ENCODE measurements at regions of chr4 and their contacts with region 1.

Region 1: DNA sequence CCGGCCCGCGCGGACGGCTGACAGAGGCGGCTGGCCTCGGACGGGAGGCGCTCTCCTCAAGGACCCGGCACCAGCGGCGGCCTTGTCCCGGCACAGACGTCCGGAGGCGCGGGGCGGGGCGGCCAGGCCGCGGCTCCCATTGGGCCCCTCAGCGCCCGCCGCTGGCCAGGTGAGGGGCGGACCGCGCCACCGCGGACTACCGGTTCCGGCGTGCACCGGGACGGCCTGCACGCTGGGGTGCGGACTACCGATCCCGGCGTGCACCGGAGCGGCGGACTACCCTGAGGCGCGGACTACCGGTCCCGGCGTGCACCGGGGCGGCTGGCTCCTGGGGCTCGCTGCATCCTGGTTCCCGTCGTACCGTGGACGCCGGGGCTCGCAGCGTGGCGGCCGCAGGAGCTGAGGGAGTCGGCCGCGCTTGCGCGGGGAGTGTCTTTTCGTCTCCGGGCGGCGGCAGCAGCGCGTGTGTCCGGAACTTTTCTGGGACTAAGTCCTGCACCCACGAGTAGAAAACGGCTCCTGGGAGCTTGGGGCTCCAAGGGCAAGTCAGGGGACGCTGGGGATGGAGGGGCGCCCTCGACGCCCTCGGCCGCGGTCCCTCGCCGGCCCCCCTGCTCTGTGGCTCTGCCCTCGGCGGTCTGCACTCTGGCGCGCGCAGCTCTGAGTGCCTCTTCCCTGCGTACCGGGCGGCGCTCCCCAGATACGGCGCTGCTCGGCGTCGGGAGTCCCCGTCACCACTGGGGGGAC is at the start of gene LETM1:
- DNase-seq: peak; percentile 92
- ATAC-seq: peak; percentile 96
- H3K4me3 ChIP-seq: peak within 1 kb of the TSS; percentile 38 to 93 (median 90)
- H3K4me3 Mint-ChIP-seq: peak within 1 kb of the TSS; percentile 85
- H3K27ac ChIP-seq: peak within 1 kb of the TSS in 1 of 2 donors; percentile 61
- H3K27ac Mint-ChIP-seq: peak within 1 kb of the TSS; percentile 56
- H3K4me1 ChIP-seq: peaks cover 15 to 19% of the 10 kb centered on the region in 2 donors
- H3K4me1 Mint-ChIP-seq: peaks cover 23% of the 10 kb centered on the region
- H3K27me3 ChIP-seq: peaks cover 0 to 3% (median 0%) of the 10 kb centered on the region in 4 experiments
- H3K27me3 Mint-ChIP-seq: no peaks in the 10 kb centered on the region
- CTCF ChIP-seq: peak; percentile 17
- total RNA-seq, gene LETM1: 44.8 and 45.1 TPM in 2 replicates

Region 2: GRCh38 chr4:1579901-1580691 is 276.1 kb before region 1 on chr4:
- CTCF ChIA-PET with region 1: no interaction called
- POLR2A ChIA-PET with region 1: no interaction called
- intact Hi-C with region 1: loop called (anchors 5 kb)
- DNase-seq: peak; percentile 95
- ATAC-seq: peak; percentile 79
- H3K4me3 ChIP-seq: peak overlapping the region; percentile 72 to 84 (median 76)
- H3K4me3 Mint-ChIP-seq: peak overlapping the region; percentile 85
- H3K27ac ChIP-seq: peak overlapping the region; percentile 46 to 71
- H3K27ac Mint-ChIP-seq: peak overlapping the region; percentile 83
- H3K4me1 ChIP-seq: peaks cover 0 to 4% of the 10 kb centered on the region in 2 donors
- H3K4me1 Mint-ChIP-seq: peaks cover 4% of the 10 kb centered on the region
- H3K27me3 ChIP-seq: no peaks in the 10 kb centered on the region
- H3K27me3 Mint-ChIP-seq: no peaks in the 10 kb centered on the region
- CTCF ChIP-seq: no peak

Region 3: DNA sequence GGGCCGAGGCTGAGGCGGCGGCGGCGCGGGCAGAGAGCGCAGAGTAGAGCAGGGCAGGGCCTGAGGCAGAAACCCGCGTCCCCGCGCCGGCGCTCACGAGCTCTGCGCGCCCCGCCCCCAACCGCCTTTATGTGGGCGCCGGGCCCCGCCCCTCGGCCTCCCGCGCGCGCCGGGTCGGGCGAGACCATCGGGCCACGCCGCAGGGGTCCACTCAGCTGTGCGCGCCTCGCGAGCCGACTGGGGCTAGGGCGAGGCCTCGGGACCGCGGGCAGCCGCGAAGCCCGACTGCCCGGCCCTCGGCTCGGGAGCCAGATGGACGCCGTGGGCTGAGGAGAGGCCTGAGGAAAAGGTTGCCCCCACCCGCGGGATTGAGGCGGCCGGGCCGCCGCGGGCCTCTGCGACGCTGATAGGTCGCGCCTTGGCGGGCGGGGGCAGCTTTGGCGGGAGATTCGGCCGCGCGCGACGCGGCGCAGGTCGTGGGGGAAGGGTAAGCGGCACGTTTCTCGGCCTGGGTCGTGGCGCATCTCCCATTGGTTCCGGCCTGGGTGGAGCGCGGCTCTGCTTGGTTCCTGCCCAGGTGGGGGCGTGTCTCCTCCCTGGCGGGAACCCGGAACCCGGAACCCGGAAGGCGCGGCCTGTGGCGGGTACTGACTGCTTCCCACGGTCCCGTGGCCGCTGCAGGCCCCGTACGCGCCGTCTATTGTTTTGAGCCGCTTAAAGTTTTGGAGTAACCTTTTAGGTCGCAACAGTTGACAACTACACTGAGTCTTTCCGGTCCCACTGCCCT is 143.8 kb before region 1 on chr4 and contains the start of gene SLBP:
- CTCF ChIA-PET with region 1: interaction called, 3 read pairs
- POLR2A ChIA-PET with region 1: no interaction called
- intact Hi-C with region 1: loop called (anchors 1 kb)
- DNase-seq: peak; percentile 99
- ATAC-seq: peak; percentile 86
- H3K4me3 ChIP-seq: peak within 1 kb of the TSS; percentile 78 to 100 (median 96)
- H3K4me3 Mint-ChIP-seq: peak within 1 kb of the TSS; percentile 91
- H3K27ac ChIP-seq: peak within 1 kb of the TSS; percentile 83 to 99
- H3K27ac Mint-ChIP-seq: peak within 1 kb of the TSS; percentile 98
- H3K4me1 ChIP-seq: peaks cover 52 to 60% of the 10 kb centered on the region in 2 donors
- H3K4me1 Mint-ChIP-seq: peaks cover 66% of the 10 kb centered on the region
- H3K27me3 ChIP-seq: no peaks in the 10 kb centered on the region
- H3K27me3 Mint-ChIP-seq: no peaks in the 10 kb centered on the region
- CTCF ChIP-seq: no peak
- total RNA-seq, gene SLBP: 31.8 and 33.9 TPM in 2 replicates

Region 4: GRCh38 chr4:1721004-1721665 is 135.1 kb before region 1 on chr4 and contains the starts of genes TACC3 and TMEM129:
- CTCF ChIA-PET with region 1: no interaction called
- POLR2A ChIA-PET with region 1: no interaction called
- intact Hi-C with region 1: loop called (anchors 2 kb)
- DNase-seq: peak; percentile 98
- ATAC-seq: peak; percentile 81
- H3K4me3 ChIP-seq: peak within 1 kb of the TSS; percentile 41 to 69 (median 60)
- H3K4me3 Mint-ChIP-seq: peak within 1 kb of the TSS; percentile 93
- H3K27ac ChIP-seq: peak within 1 kb of the TSS; percentile 89 to 96
- H3K27ac Mint-ChIP-seq: peak within 1 kb of the TSS; percentile 98
- H3K4me1 ChIP-seq: peaks cover 59 to 84% of the 10 kb centered on the region in 2 donors
- H3K4me1 Mint-ChIP-seq: peaks cover 65% of the 10 kb centered on the region
- H3K27me3 ChIP-seq: no peaks in the 10 kb centered on the region
- H3K27me3 Mint-ChIP-seq: no peaks in the 10 kb centered on the region
- CTCF ChIP-seq: no peak
- total RNA-seq, gene TACC3: 47.9 and 54.5 TPM in 2 replicates
- total RNA-seq, gene TMEM129: 41.0 and 41.9 TPM in 2 replicates

Region 5: DNA sequence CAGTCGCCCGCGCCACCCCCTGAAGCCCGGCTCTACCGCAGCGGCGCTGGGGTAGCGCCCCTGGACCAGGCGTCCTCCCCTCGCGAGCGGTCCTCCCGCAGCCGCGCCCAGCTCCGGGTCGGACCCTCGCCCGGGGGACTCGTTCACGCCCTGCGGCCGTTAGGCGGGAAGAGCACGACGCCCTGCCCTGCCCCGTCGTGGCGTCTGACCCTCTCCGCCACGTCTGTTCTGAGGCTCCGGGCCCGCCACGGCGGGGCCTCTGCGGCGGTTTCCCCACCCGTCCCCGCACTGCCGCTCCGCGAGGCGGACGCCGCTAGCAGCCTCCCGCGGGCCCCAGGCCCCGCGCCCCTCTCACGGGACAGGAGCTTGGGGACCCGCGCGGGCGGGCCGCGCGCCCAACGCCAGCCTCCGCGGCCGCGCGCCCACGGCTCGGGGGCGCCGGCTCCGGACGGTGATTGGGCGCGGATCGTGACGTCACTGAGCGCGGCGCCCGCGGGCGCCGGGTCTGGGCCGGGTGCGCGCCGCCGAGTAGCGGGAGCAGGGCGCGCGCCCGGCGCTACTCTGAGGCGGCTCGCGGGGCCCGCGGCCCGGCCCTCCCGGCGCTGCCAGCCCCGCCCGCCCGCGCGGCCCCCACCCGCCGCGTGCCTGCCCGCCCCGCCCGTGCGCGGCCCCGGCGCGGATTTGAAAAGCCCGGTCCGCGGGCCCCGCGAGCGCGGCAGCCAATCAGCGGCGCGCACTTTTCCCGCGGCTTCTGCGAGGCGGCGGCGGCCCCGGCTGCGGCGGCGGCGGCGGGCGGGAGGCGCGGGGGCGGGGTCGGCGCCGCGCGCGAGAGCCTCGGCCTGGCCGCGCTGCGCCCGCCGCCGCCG is 14.6 kb after region 1 on chr4 and contains the start of gene NSD2:
- CTCF ChIA-PET with region 1: interaction called, 3 read pairs
- POLR2A ChIA-PET with region 1: interaction called, 11 read pairs
- intact Hi-C with region 1: loop called (anchors 1 kb)
- DNase-seq: peak; percentile 95
- ATAC-seq: peak; percentile 66
- H3K4me3 ChIP-seq: peak within 1 kb of the TSS; percentile 13 to 89 (median 79)
- H3K4me3 Mint-ChIP-seq: peak within 1 kb of the TSS; percentile 87
- H3K27ac ChIP-seq: peak within 1 kb of the TSS; percentile 87 to 95
- H3K27ac Mint-ChIP-seq: peak within 1 kb of the TSS; percentile 93
- H3K4me1 ChIP-seq: peaks cover 12 to 26% of the 10 kb centered on the region in 2 donors
- H3K4me1 Mint-ChIP-seq: peaks cover 26% of the 10 kb centered on the region
- H3K27me3 ChIP-seq: peaks cover 0 to 4% (median 2%) of the 10 kb centered on the region in 4 experiments
- H3K27me3 Mint-ChIP-seq: no peaks in the 10 kb centered on the region
- CTCF ChIP-seq: no peak
- total RNA-seq, gene NSD2: 64.8 and 71.9 TPM in 2 replicates

Region 6: GRCh38 chr4:2418650-2419571 is 562.7 kb after region 1 on chr4 and contains the start of gene CFAP99:
- CTCF ChIA-PET with region 1: no interaction called
- POLR2A ChIA-PET with region 1: no interaction called
- intact Hi-C with region 1: loop called (anchors 5 kb)
- DNase-seq: peak; percentile 99
- ATAC-seq: peak; percentile 92
- H3K4me3 ChIP-seq: peak within 1 kb of the TSS; percentile 2 to 72 (median 51)
- H3K4me3 Mint-ChIP-seq: peak within 1 kb of the TSS; percentile 89
- H3K27ac ChIP-seq: peak within 1 kb of the TSS; percentile 29 to 76
- H3K27ac Mint-ChIP-seq: peak within 1 kb of the TSS; percentile 89
- H3K4me1 ChIP-seq: peaks cover 34 to 38% of the 10 kb centered on the region in 2 donors
- H3K4me1 Mint-ChIP-seq: peaks cover 44% of the 10 kb centered on the region
- H3K27me3 ChIP-seq: peaks cover 0 to 64% (median 33%) of the 10 kb centered on the region in 4 experiments
- H3K27me3 Mint-ChIP-seq: peaks cover 40% of the 10 kb centered on the region
- CTCF ChIP-seq: peak; percentile 41
- total RNA-seq, gene CFAP99: not detected in 2 replicates